Activated B cell treated with CpG ODN at 0.5 μM for 24 hours (primary cell): ENCODE measurements at regions of chr21 and their contacts with region 1.

Region 1: DNA sequence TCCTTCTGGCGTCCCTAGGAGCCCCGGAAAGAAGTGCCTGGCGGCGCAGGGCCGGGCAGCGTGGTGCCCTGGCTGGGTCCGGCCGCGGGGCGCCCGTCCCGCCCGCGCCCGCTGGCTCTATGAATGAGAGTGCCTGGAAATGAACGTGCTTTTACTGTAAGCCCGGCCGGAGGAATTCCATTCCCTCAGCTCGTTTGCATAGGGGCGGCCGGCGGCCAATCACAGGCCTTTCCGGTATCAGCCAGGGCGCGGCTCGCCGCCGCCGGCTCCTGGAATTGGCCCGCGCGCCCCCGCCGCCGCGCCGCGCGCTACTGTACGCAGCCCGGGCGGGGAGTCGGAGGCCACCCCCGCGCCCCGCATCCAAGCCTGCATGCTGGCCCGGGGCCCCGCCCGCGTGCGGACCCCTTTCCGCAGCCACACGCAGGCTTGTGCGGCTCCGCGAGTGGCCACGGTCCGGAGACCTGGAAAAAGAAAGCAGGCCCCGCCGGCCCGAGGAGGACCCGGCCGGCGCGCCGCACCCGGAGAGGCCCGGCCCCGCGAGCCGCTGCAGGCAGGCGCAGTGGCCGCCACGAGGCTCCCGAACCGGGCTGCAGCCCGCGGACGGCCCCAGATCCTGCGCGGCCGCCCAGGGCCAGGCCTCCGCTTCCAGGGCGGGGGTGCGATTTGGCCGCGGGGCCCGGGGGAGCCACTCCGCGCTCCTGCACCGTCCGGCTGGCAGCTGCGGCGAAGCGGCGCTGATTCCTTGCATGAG is 160.4 kb downstream of the RUNX1 start:
- DNase-seq: peak; percentile 82
- ATAC-seq: peak; percentile 45
- H3K4me3 Mint-ChIP-seq: peak overlapping the region; percentile 91
- H3K27ac Mint-ChIP-seq: peak overlapping the region; percentile 99
- H3K4me1 Mint-ChIP-seq: peaks cover 53% of the 10 kb centered on the region
- H3K27me3 Mint-ChIP-seq: peaks cover 1% of the 10 kb centered on the region
- CTCF ChIP-seq: no peak

Region 2: GRCh38 chr21:34745557-34746255 is 143.0 kb before region 1 on chr21:
- CTCF ChIA-PET with region 1: interaction called, 14 read pairs
- POLR2A ChIA-PET with region 1: interaction called, 28 read pairs
- intact Hi-C with region 1: loop called (anchors 1 kb)
- DNase-seq: peak; percentile 33
- ATAC-seq: peak; percentile 95
- H3K4me3 Mint-ChIP-seq: peak overlapping the region; percentile 72
- H3K27ac Mint-ChIP-seq: no peak overlapping the region
- H3K4me1 Mint-ChIP-seq: peaks cover 5% of the 10 kb centered on the region
- H3K27me3 Mint-ChIP-seq: peaks cover 16% of the 10 kb centered on the region
- CTCF ChIP-seq: peak; percentile 36

Region 3: DNA sequence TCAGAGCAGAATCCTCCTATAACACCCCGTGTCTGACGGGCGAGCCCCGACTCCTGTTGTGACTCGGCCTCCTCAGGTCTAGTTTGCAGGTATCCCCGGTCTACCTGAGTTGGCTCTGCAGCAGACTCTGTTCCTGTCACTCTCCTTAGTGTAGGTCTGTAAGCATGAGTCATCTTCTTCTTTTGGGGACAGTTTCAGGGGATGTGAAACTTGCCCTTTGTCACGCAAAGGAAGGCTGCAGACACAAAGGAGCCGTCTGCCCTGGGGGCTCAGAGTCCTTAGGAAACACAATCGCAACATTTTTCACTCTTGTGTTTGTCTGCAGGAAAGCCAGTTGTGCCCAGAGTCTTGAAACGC is 22.8 kb before region 1 on chr21:
- CTCF ChIA-PET with region 1: interaction called, 23 read pairs
- POLR2A ChIA-PET with region 1: interaction called, 218 read pairs
- intact Hi-C with region 1: loop called (anchors 1 kb)
- DNase-seq: no peak
- ATAC-seq: peak; percentile 82
- H3K4me3 Mint-ChIP-seq: peak overlapping the region; percentile 73
- H3K27ac Mint-ChIP-seq: peak overlapping the region; percentile 87
- H3K4me1 Mint-ChIP-seq: peaks cover 49% of the 10 kb centered on the region
- H3K27me3 Mint-ChIP-seq: no peaks in the 10 kb centered on the region
- CTCF ChIP-seq: no peak

Region 4: GRCh38 chr21:34986561-34987500 is 98.1 kb after region 1 on chr21:
- CTCF ChIA-PET with region 1: interaction called, 7 read pairs
- POLR2A ChIA-PET with region 1: interaction called, 7 read pairs
- intact Hi-C with region 1: loop called (anchors 1 kb)
- DNase-seq: peak; percentile 36
- ATAC-seq: peak; percentile 74
- H3K4me3 Mint-ChIP-seq: peak overlapping the region; percentile 69
- H3K27ac Mint-ChIP-seq: peak overlapping the region; percentile 78
- H3K4me1 Mint-ChIP-seq: peaks cover 78% of the 10 kb centered on the region
- H3K27me3 Mint-ChIP-seq: no peaks in the 10 kb centered on the region
- CTCF ChIP-seq: no peak

Region 5: GRCh38 chr21:35095859-35096291 is 207.1 kb after region 1 on chr21:
- CTCF ChIA-PET with region 1: no interaction called
- POLR2A ChIA-PET with region 1: no interaction called
- intact Hi-C with region 1: no loop called
- DNase-seq: no peak
- ATAC-seq: no peak
- H3K4me3 Mint-ChIP-seq: no peak overlapping the region
- H3K27ac Mint-ChIP-seq: no peak overlapping the region
- H3K4me1 Mint-ChIP-seq: no peaks in the 10 kb centered on the region
- H3K27me3 Mint-ChIP-seq: peaks cover 6% of the 10 kb centered on the region
- CTCF ChIP-seq: no peak

Region 6: DNA sequence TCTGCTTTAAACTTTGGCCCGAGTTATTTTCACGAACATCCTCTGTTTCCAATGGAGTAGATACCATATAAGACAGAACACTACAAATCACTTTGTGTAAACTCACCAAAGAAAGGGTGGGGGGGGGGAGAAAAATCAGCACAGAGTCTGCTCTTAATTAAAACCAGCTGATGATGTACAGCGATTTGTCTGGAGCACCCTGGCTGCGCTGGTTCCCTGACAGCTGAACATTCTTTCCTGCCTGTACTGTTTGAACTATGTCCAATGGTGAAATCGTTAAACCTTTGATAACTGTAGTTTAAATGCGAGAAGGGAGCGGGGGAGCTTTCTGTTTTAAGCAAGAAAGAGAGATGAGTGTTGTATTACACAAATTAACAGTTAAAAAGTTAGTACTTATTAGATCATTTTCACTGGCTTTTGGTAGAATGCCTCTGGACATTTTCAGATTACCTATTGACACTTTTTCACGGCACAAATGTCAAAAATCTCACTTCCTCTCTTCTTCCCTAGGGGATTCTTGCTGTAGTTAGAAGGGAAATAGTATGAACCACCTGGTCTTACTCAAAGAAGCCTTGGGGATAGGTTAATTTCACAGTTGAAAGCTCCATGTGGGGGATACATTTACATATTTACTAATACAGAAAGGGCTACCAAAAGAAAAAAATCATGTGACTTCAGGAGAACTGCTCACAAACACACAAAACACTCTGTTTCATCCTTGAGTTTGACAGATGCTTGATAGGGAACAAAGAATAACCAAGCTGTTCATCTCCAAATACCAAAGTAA is 300.5 kb after region 1 on chr21:
- CTCF ChIA-PET with region 1: no interaction called
- POLR2A ChIA-PET with region 1: interaction called, 10 read pairs
- intact Hi-C with region 1: loop called (anchors 1 kb)
- DNase-seq: no peak
- ATAC-seq: peak; percentile 96
- H3K4me3 Mint-ChIP-seq: peak overlapping the region; percentile 55
- H3K27ac Mint-ChIP-seq: peak overlapping the region; percentile 78
- H3K4me1 Mint-ChIP-seq: peaks cover 36% of the 10 kb centered on the region
- H3K27me3 Mint-ChIP-seq: no peaks in the 10 kb centered on the region
- CTCF ChIP-seq: no peak

Region 7: DNA sequence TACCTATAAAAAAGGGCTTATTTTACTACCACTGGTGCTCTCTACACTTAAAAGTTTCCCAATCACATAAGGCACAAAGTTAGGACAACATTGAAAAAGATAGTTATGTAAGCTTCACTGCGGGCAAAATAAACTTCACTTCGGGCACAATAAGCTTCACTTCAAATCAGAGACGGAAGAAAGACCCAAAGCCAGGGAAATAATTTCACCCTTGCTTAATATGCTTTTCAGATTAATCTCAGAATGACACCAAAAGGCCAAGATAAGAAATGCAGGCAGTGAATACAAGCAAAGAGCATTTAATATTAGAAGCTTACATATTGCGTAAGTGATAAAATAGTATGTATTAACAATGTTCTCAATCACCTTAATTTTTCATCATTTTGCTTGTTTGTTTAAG is 727.3 kb after region 1 on chr21:
- CTCF ChIA-PET with region 1: interaction called, 3 read pairs
- POLR2A ChIA-PET with region 1: interaction called, 3 read pairs
- intact Hi-C with region 1: loop called (anchors 1 kb)
- DNase-seq: no peak
- ATAC-seq: no peak
- H3K4me3 Mint-ChIP-seq: no peak overlapping the region
- H3K27ac Mint-ChIP-seq: no peak overlapping the region
- H3K4me1 Mint-ChIP-seq: peaks cover 3% of the 10 kb centered on the region
- H3K27me3 Mint-ChIP-seq: no peaks in the 10 kb centered on the region
- CTCF ChIP-seq: no peak